ENCODE measurements at regions of chr15 and their contacts with region 1.

Region 1: GRCh38 chr15:24985224-24985623 is 30.4 kb downstream of the SNRPN start:
- DNase-seq: no peak

Region 2: DNA sequence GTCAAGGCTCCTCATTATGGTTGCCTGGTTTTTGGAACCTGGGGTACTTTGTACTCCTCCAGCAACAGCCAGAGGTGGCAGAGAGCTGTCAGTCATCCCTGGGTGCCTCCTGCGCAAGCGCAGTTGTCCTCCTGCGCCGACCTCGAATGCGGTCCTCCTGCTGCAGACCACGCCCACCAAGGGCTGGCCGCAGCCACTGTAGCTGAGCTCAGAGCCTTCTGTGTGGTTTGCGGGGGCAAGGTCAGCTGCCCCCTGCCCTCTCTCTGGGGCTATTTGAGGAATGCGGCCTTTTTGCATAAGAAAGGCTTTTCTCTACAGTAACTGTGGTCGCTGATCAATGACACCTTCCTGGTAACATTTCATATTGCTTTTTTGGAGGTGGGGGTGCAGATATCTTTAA is 161.8 kb before region 1 on chr15:
- intact Hi-C with region 1: no loop called
- DNase-seq: no peak

Region 3: DNA sequence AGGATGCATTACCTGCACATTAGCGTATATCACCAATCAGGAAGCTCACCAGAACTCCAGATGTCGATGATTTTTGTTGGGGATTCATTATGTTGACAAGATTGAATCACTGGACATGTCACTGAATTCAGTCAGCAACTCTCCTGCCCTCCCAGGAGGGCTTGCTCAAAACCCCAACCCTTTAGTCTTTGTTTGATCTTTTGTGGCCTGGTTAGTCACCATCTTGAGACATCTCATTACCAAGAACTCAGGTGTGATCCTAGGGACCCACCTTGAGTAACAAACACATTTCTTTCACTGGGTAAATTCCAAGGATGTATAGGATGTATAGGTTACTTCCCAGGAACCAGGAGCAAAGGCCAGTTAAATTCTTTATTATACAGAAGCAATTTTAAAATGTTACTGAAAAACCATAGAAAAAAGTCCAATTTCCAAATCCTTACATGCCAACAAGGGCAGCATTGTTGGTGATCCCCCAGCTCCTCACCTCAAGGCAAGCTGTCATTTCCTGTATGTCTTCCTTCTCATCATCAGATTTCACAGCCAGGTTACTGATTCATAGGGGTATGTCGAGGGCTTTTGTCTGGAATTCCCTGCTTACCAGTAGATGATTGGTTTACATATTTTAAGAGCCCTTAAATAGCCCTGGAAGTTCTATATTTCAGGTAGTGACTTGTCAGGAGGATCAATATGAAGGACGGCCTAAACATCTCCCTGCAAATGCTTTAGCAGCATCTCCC is 18.7 kb before region 1 on chr15:
- intact Hi-C with region 1: no loop called
- DNase-seq: no peak

Region 4: GRCh38 chr15:26555898-26556297 is 1570.7 kb after region 1 on chr15:
- intact Hi-C with region 1: loop called in 1 of 2 experiments (anchors 5 kb)
- DNase-seq: no peak

Measured in posterior vena cava (tissue), 2 donors.